Activated CD8-positive, alpha-beta memory T cell treated with anti-CD3 and anti-CD28 coated beads, Interleukin-2, amount 10 ng/mL, durations not matched to agents 7 days and 5 days (primary cell): ENCODE measurements at regions of chr15 and their contacts with region 1.

Region 1: GRCh38 chr15:41774062-41774881 is at the start of gene MAPKBP1:
- DNase-seq: peak; percentile 99
- ATAC-seq: peak; percentile 93
- H3K4me3 Mint-ChIP-seq: peak within 1 kb of the TSS; percentile 91
- H3K27ac Mint-ChIP-seq: peak within 1 kb of the TSS; percentile 95
- H3K4me1 Mint-ChIP-seq: peaks cover 55% of the 10 kb centered on the region
- H3K27me3 Mint-ChIP-seq: no peaks in the 10 kb centered on the region
- total RNA-seq, gene MAPKBP1: 24.7 to 33.1 TPM

Region 2: DNA sequence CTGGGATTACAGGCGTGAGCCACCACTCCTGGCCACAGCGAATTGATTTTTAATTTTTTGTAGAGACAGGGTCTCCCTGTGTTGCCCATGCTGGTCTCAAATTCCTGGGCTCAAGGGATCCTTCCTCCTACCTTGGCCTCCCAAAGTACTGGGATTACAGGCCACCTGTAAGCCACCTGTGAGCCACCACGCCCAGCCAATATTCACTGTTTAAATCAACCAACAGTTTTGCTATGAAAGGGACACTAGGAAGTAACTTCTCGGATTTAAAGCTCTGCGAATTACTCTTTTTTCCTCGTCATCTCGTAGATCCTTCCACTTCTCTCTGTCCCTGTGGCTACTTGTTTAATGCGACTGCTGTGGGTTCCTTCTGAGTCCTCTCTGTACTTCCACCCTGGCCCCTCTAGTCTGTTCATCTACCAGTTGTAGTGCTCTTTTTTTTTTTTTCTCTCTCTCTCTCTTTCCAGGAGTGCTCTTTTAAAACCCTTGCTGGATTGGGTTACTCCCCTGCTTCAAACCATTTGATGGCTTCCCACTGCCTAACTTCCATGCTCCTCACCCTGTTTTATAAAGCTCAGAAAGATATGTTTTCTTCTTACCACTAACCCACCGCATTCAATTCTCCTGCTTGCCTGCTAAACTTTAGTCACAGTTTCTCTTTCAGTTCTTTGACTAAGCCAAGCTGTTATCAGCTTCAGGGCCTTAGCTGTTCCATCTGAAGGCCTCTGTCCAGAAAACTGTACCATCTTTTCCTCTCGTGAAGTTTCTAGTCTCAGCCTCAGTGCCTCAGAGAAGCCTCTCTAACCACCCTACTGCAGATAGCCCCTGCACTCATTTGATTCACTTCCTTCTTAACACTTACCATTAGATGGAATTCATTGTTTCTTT is 345.0 kb before region 1 on chr15:
- CTCF ChIA-PET with region 1: no interaction called
- DNase-seq: peak; percentile 56
- ATAC-seq: peak; percentile 89
- H3K4me3 Mint-ChIP-seq: peak overlapping the region; percentile 72
- H3K27ac Mint-ChIP-seq: peak overlapping the region; percentile 97
- H3K4me1 Mint-ChIP-seq: peaks cover 32% of the 10 kb centered on the region
- H3K27me3 Mint-ChIP-seq: no peaks in the 10 kb centered on the region

Region 3: DNA sequence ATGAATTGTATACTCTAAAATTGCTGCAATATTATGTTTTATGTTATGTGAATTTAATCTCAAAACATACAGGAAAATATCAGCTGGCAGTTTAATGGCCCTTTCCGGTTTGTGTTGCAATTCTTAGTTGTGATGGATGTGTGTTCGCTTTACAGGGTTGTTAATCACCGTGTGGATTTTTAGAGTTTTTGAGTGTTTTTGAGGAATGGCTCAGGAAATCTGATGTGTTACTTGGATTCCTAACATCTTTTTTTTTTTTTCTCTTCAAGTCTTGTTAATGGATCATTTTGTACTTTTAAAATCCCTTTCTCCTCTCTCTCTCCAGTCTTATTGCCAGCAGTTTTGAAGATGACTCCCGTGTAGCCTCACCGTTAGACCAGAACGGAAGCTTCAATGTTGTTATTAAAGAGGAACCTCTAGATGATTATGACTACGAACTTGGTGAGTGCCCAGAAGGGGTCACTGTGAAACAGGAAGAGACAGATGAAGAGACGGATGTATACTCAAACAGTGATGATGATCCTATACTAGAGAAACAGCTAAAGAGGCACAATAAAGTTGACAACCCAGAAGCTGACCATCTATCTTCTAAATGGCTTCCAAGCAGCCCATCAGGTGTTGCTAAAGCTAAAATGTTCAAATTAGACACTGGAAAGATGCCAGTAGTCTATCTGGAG is 78.4 kb before region 1 on chr15:
- CTCF ChIA-PET with region 1: interaction called, 24 read pairs
- DNase-seq: peak; percentile 80
- ATAC-seq: peak; percentile 98
- H3K4me3 Mint-ChIP-seq: peak overlapping the region; percentile 12
- H3K27ac Mint-ChIP-seq: peak overlapping the region; percentile 78
- H3K4me1 Mint-ChIP-seq: peaks cover 38% of the 10 kb centered on the region
- H3K27me3 Mint-ChIP-seq: no peaks in the 10 kb centered on the region

Region 4: DNA sequence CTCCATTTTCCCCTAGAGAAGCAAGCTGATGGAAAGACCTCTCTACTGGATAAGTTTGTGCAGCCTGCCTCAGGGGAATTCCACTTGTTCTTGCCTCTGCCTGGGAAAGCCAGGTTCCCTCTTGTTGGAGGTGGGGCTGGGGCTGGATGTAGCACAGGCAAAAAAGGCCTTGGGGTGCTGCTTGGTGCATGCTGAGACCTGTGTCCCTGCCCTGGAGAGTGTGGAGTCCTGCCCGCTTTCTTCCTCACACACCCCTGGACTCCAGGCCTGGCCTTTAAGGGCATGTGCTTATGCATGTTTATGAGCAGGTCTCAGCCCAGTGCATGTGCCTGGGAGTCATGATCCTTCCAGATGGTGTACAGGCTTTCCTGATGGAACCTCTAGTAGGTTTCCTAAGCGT is 30.1 kb after region 1 on chr15:
- CTCF ChIA-PET with region 1: interaction called, 247 read pairs
- DNase-seq: no peak
- ATAC-seq: no peak
- H3K4me3 Mint-ChIP-seq: no peak overlapping the region
- H3K27ac Mint-ChIP-seq: no peak overlapping the region
- H3K4me1 Mint-ChIP-seq: peaks cover 6% of the 10 kb centered on the region
- H3K27me3 Mint-ChIP-seq: no peaks in the 10 kb centered on the region

Region 5: DNA sequence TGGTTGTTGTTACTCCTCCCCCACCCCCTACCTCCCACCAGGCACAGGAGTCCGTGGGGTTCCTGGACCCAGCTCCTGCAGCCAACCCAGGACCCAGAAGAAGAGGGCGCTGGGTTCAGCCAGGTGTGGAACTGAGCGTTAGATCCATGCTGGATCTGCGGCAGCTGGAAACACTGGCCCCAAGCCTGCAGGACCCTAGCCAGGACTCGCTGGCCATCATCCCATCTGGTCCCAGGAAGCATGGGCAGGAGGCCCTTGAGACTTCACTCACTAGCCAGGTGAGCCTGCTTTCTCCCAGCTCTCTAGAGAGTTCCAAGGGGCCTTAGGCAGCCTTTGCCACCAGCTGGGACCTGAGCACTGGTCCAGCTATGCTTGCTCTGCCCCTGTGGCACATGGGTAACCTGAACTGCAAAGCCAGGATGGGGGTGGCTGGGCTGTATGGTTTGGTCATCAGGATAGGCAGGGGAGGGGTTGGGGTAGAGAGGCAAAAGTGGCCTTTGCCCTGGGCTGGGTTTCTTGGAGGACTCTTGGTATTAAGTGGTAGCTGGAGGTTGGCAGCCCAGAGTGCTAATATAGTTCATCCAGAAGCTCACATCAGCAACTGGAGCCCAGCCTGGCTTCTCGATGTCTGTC is 46.6 kb after region 1 on chr15:
- CTCF ChIA-PET with region 1: interaction called, 24 read pairs
- DNase-seq: no peak
- ATAC-seq: no peak
- H3K4me3 Mint-ChIP-seq: no peak overlapping the region
- H3K27ac Mint-ChIP-seq: no peak overlapping the region
- H3K4me1 Mint-ChIP-seq: no peaks in the 10 kb centered on the region
- H3K27me3 Mint-ChIP-seq: no peaks in the 10 kb centered on the region

Region 6: DNA sequence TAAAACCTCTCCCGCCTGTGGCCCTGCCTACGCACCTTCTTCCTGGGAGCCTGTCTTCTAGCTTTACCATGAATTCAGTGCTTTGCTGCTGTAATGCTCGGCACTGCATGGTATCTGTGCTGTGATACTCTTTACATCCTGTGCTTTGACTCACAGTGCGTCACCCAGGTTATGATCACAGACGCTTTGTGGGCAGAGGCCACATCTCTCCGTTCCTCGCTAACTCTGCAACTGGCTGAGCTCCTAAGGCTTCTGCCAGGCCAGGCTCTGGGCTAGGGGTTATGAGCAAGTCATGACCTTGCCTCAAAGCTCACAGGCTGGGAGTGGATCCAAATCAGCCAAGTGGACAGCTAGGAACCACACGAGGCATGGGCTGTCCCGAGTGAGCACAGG is 96.4 kb after region 1 on chr15:
- CTCF ChIA-PET with region 1: interaction called, 17 read pairs
- DNase-seq: peak; percentile 87
- ATAC-seq: peak; percentile 96
- H3K4me3 Mint-ChIP-seq: no peak overlapping the region
- H3K27ac Mint-ChIP-seq: peak overlapping the region; percentile 88
- H3K4me1 Mint-ChIP-seq: peaks cover 17% of the 10 kb centered on the region
- H3K27me3 Mint-ChIP-seq: no peaks in the 10 kb centered on the region

Region 7: GRCh38 chr15:41904541-41905005 is 130.3 kb after region 1 on chr15:
- CTCF ChIA-PET with region 1: interaction called, 130 read pairs
- DNase-seq: peak; percentile 80
- ATAC-seq: peak; percentile 92
- H3K4me3 Mint-ChIP-seq: no peak overlapping the region
- H3K27ac Mint-ChIP-seq: peak overlapping the region; percentile 74
- H3K4me1 Mint-ChIP-seq: peaks cover 18% of the 10 kb centered on the region
- H3K27me3 Mint-ChIP-seq: no peaks in the 10 kb centered on the region

Region 8: GRCh38 chr15:41972253-41973242 is 198.3 kb after region 1 on chr15 and contains the start of gene EHD4:
- CTCF ChIA-PET with region 1: interaction called, 17 read pairs
- DNase-seq: peak; percentile 98
- ATAC-seq: peak; percentile 92
- H3K4me3 Mint-ChIP-seq: peak within 1 kb of the TSS; percentile 86
- H3K27ac Mint-ChIP-seq: peak within 1 kb of the TSS; percentile 91
- H3K4me1 Mint-ChIP-seq: peaks cover 48% of the 10 kb centered on the region
- H3K27me3 Mint-ChIP-seq: peaks cover 24% of the 10 kb centered on the region
- total RNA-seq, gene EHD4: 15.6 to 19.8 TPM